ENCODE measurements at regions of chr3 and their contacts with region 1.

Region 1: DNA sequence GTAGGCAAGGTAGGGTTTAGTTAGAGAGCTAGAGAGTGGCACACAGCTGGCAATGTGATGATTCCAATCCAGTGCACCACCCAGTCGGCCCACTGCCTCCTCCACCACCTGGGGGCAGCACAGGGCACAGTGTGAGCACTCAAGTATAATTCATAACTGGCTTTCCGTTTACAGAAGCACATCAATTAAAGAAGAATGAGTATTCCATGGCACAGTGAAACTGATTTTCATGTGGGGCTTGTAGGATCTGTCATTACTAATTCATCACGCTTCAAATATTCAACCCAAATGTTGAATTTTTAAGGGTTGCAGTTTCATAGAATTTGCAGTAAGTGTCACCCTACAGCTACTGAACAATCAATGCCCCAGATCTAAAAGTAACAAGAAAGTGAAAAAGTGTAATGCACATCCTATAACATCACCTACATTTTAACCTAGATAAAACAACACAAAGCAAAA is 149.9 kb downstream of the IGSF11 start:
- DNase-seq: peak; percentile 73
- H3K4me3 ChIP-seq: no peak overlapping the region
- H3K27ac ChIP-seq: no peak overlapping the region
- H3K4me1 ChIP-seq: no peaks in the 10 kb centered on the region
- H3K27me3 ChIP-seq: peaks cover 7% of the 10 kb centered on the region
- CTCF ChIP-seq: peak; percentile 70 to 83 (median 77)
- EP300 ChIP-seq: no peak
- POLR2A ChIP-seq: no peak

Region 2: GRCh38 chr3:118909763-118910162 is 25.0 kb after region 1 on chr3:
- in situ Hi-C with region 1: no loop called
- intact Hi-C with region 1: no loop called
- DNase-seq: no peak
- H3K4me3 ChIP-seq: no peak overlapping the region
- H3K27ac ChIP-seq: no peak overlapping the region
- H3K4me1 ChIP-seq: no peaks in the 10 kb centered on the region
- H3K27me3 ChIP-seq: no peaks in the 10 kb centered on the region
- CTCF ChIP-seq: no peak
- EP300 ChIP-seq: no peak
- POLR2A ChIP-seq: no peak

Region 3: GRCh38 chr3:118927449-118927848 is 42.7 kb after region 1 on chr3:
- in situ Hi-C with region 1: no loop called
- intact Hi-C with region 1: no loop called
- DNase-seq: no peak
- H3K4me3 ChIP-seq: no peak overlapping the region
- H3K27ac ChIP-seq: no peak overlapping the region
- H3K4me1 ChIP-seq: no peaks in the 10 kb centered on the region
- H3K27me3 ChIP-seq: no peaks in the 10 kb centered on the region
- CTCF ChIP-seq: no peak
- EP300 ChIP-seq: no peak
- POLR2A ChIP-seq: no peak

Region 4: GRCh38 chr3:119034256-119035013 is 149.7 kb after region 1 on chr3 and contains the start of gene IGSF11:
- in situ Hi-C with region 1: loop called in 1 of 4 experiments (anchors 10 kb)
- intact Hi-C with region 1: loop called (anchors 10 kb)
- DNase-seq: peak; percentile 45
- H3K4me3 ChIP-seq: peak within 1 kb of the TSS; percentile 45 to 59 (median 52)
- H3K27ac ChIP-seq: peak within 1 kb of the TSS in 3 of 4 donors; percentile 20 to 40 (median 36)
- H3K4me1 ChIP-seq: peaks cover 0 to 9% (median 7%) of the 10 kb centered on the region in 4 donors
- H3K27me3 ChIP-seq: peaks cover 68% of the 10 kb centered on the region
- CTCF ChIP-seq: peak in 3 of 5 experiments; percentile 15 to 39 (median 32)
- EP300 ChIP-seq: no peak
- POLR2A ChIP-seq: no peak
- total RNA-seq, gene IGSF11: 0.27 to 0.95 (median 0.59) TPM

Region 5: DNA sequence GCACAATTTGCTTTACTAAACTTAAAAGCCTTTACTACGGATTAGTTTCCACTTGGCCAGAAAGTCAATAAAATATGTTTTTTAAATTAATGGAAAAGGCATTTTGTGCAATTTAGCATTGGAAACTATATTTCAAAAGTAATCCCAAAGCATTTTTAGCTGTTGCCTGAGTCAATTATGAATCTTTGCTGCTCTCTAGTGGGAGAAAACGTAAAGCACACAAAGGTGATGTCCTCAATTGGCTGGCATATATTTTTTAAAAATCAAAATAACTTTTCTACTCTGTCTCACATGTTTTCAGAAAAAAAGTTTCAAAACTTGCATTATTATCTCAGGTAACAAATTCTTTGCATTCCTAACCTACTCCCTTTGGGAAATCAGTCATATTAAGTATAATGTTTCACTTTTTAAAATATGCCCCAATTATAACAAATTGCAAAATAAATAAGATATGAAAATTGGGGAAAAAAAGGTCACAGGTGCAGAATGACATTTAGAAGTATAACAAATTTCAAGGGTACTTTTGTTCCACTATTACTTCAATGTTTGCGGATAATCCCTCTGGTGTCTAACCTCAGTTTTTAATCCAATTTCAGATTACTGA is 213.9 kb after region 1 on chr3:
- in situ Hi-C with region 1: loop called (anchors 5 to 10 kb)
- intact Hi-C with region 1: loop called (anchors 1 kb)
- DNase-seq: no peak
- H3K4me3 ChIP-seq: no peak overlapping the region
- H3K27ac ChIP-seq: no peak overlapping the region
- H3K4me1 ChIP-seq: no peaks in the 10 kb centered on the region
- H3K27me3 ChIP-seq: no peaks in the 10 kb centered on the region
- CTCF ChIP-seq: peak; percentile 45 to 57 (median 53)
- EP300 ChIP-seq: no peak
- POLR2A ChIP-seq: no peak

Region 6: GRCh38 chr3:119352849-119353502 is 468.2 kb after region 1 on chr3:
- in situ Hi-C with region 1: loop called in 1 of 4 experiments (anchors 25 kb)
- intact Hi-C with region 1: no loop called
- DNase-seq: no peak
- H3K4me3 ChIP-seq: no peak overlapping the region
- H3K27ac ChIP-seq: peak overlapping the region in 2 of 4 donors; percentile 6 to 33
- H3K4me1 ChIP-seq: peaks cover 3 to 38% (median 10%) of the 10 kb centered on the region in 4 donors
- H3K27me3 ChIP-seq: no peaks in the 10 kb centered on the region
- CTCF ChIP-seq: peak in 4 of 5 experiments; percentile 21 to 46 (median 34)
- EP300 ChIP-seq: no peak
- POLR2A ChIP-seq: no peak

Measured in transverse colon (tissue), 4 donors.